Activated T-helper 1 cell treated with anti-CD3 and anti-CD28 coated beads, Interleukin-12 subunit alpha, Interleukin-12 subunit beta, Interleukin-2, Interleukin-4 antibody, amounts not matched to agents 30 ng/mL and 10 ng/mL and 1 ng/mL, durations not matched to agents 14 hours and 24 hours and 36 hours (primary cell): ENCODE measurements at regions of chr3 and their contacts with region 1.

Region 1: GRCh38 chr3:56915966-56916586 is 114.3 kb upstream of the ARHGEF3 start:
- DNase-seq: peak; percentile 71
- H3K4me3 Mint-ChIP-seq: peak overlapping the region; percentile 89
- H3K27ac Mint-ChIP-seq: peak overlapping the region; percentile 88
- H3K4me1 Mint-ChIP-seq: peaks cover 68% of the 10 kb centered on the region
- H3K27me3 Mint-ChIP-seq: no peaks in the 10 kb centered on the region

Region 2: GRCh38 chr3:56682462-56683121 is 233.5 kb before region 1 on chr3:
- intact Hi-C with region 1: loop called (anchors 5 kb)
- DNase-seq: peak; percentile 77
- H3K4me3 Mint-ChIP-seq: peak overlapping the region; percentile 97
- H3K27ac Mint-ChIP-seq: peak overlapping the region; percentile 96
- H3K4me1 Mint-ChIP-seq: peaks cover 45% of the 10 kb centered on the region
- H3K27me3 Mint-ChIP-seq: peaks cover 2% of the 10 kb centered on the region

Region 3: GRCh38 chr3:56753206-56753820 is 162.8 kb before region 1 on chr3:
- intact Hi-C with region 1: loop called (anchors 1 kb)
- DNase-seq: peak; percentile 47
- H3K4me3 Mint-ChIP-seq: peak overlapping the region; percentile 67
- H3K27ac Mint-ChIP-seq: peak overlapping the region; percentile 83
- H3K4me1 Mint-ChIP-seq: peaks cover 68% of the 10 kb centered on the region
- H3K27me3 Mint-ChIP-seq: no peaks in the 10 kb centered on the region

Region 4: DNA sequence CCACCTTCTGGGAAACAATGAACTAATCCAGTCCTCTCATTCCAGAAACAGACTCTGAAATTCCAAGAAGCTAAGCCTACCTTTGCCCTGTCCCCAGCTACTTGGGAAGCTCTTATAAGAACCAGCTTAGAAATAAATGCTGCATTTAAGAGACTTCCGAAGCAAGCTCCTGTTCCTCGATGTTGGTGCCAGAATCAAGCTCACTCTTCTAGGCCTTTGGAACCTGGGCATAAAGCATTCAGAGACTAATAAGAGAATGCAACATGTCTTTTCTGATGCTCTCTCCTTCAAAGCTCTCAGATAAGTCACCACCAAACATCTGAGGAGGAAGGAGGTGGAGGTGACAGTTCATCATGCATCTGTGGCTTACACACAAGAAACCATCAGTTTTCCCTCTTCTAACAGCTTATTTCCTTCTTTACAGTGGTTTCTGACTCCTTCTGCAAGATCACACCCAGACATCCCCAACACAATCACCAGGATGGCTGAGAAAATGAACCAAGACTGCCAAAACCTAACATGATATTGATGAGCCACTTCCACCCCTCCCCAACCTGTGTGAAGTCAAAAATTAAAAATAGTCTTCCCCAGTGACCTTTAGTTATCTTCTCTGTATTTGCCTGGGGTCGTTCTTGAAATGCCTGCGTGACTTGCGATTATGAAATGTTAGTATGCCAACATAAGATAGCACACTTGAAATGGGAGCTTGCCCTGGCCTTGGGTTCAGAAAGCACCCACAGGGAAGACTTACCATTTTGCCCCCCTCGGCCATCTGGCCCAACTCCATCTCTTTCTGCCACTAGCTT is 125.9 kb before region 1 on chr3:
- intact Hi-C with region 1: loop called (anchors 1 kb)
- DNase-seq: peak; percentile 35
- H3K4me3 Mint-ChIP-seq: peak overlapping the region; percentile 70
- H3K27ac Mint-ChIP-seq: peak overlapping the region; percentile 89
- H3K4me1 Mint-ChIP-seq: peaks cover 86% of the 10 kb centered on the region
- H3K27me3 Mint-ChIP-seq: no peaks in the 10 kb centered on the region

Region 5: GRCh38 chr3:56878074-56878473 is 38.0 kb before region 1 on chr3:
- intact Hi-C with region 1: loop called (anchors 1 kb)
- DNase-seq: peak; percentile 14
- H3K4me3 Mint-ChIP-seq: peak overlapping the region; percentile 72
- H3K27ac Mint-ChIP-seq: peak overlapping the region; percentile 92
- H3K4me1 Mint-ChIP-seq: peaks cover 76% of the 10 kb centered on the region
- H3K27me3 Mint-ChIP-seq: no peaks in the 10 kb centered on the region

Region 6: DNA sequence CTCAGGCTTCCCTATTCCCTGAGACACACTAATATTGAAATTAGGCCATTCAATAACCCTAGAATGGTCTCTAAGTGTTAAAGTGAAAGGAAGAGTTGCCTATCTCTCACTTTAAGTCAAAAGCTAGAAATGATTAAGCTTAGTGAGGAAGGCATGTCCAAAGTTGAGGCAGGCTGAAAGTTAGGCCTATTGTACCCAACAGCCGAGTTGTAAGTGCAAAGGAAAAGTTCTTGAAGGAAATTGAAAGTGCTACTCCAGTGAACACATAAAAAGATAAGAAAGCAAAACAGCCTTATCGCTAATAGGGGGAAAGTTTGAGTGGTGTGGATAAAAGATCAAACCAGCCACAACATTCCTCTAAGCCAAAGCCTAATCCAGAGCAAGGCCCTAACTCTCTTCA is 26.4 kb after region 1 on chr3:
- intact Hi-C with region 1: loop called (anchors 1 kb)
- DNase-seq: no peak
- H3K4me3 Mint-ChIP-seq: peak overlapping the region; percentile 6
- H3K27ac Mint-ChIP-seq: peak overlapping the region; percentile 40
- H3K4me1 Mint-ChIP-seq: peaks cover 24% of the 10 kb centered on the region
- H3K27me3 Mint-ChIP-seq: peaks cover 9% of the 10 kb centered on the region